Natural killer cell (primary cell): ENCODE measurements at regions of chr17 and their contacts with region 1.

Region 1: GRCh38 chr17:2592971-2593820 is at the start of gene PAFAH1B1:
- DNase-seq: peak; percentile 92 to 95
- ATAC-seq: peak; percentile 76 to 93 (median 79)
- H3K4me3 ChIP-seq: peak within 1 kb of the TSS; percentile 66
- H3K4me3 Mint-ChIP-seq: peak within 1 kb of the TSS; percentile 93
- H3K27ac ChIP-seq: peak within 1 kb of the TSS; percentile 99
- H3K27ac Mint-ChIP-seq: peak within 1 kb of the TSS; percentile 88 to 93
- H3K4me1 ChIP-seq: peaks cover 22% of the 10 kb centered on the region
- H3K4me1 Mint-ChIP-seq: peaks cover 25 to 32% of the 10 kb centered on the region in 2 donors
- H3K27me3 ChIP-seq: no peaks in the 10 kb centered on the region
- H3K27me3 Mint-ChIP-seq: no peaks in the 10 kb centered on the region
- CTCF ChIP-seq: no peak
- total RNA-seq, gene PAFAH1B1: 138 to 176 (median 165) TPM

Region 2: GRCh38 chr17:2532146-2532720 is 61.0 kb before region 1 on chr17:
- intact Hi-C with region 1: no loop called
- DNase-seq: no peak
- ATAC-seq: no peak
- H3K4me3 ChIP-seq: no peak overlapping the region
- H3K4me3 Mint-ChIP-seq: no peak overlapping the region
- H3K27ac ChIP-seq: no peak overlapping the region
- H3K27ac Mint-ChIP-seq: no peak overlapping the region
- H3K4me1 ChIP-seq: peaks cover 7% of the 10 kb centered on the region
- H3K4me1 Mint-ChIP-seq: peaks cover 7 to 11% of the 10 kb centered on the region in 2 donors
- H3K27me3 ChIP-seq: no peaks in the 10 kb centered on the region
- H3K27me3 Mint-ChIP-seq: no peaks in the 10 kb centered on the region
- CTCF ChIP-seq: no peak

Region 3: GRCh38 chr17:2656283-2656682 is 63.1 kb after region 1 on chr17:
- intact Hi-C with region 1: loop called (anchors 5 kb)
- DNase-seq: no peak
- ATAC-seq: peak in 1 of 3 donors; percentile 5
- H3K4me3 ChIP-seq: no peak overlapping the region
- H3K4me3 Mint-ChIP-seq: peak overlapping the region; percentile 56
- H3K27ac ChIP-seq: peak overlapping the region; percentile 40
- H3K27ac Mint-ChIP-seq: peak overlapping the region; percentile 79 to 84
- H3K4me1 ChIP-seq: peaks cover 15% of the 10 kb centered on the region
- H3K4me1 Mint-ChIP-seq: peaks cover 45 to 48% of the 10 kb centered on the region in 2 donors
- H3K27me3 ChIP-seq: no peaks in the 10 kb centered on the region
- H3K27me3 Mint-ChIP-seq: no peaks in the 10 kb centered on the region
- CTCF ChIP-seq: no peak

Region 4: DNA sequence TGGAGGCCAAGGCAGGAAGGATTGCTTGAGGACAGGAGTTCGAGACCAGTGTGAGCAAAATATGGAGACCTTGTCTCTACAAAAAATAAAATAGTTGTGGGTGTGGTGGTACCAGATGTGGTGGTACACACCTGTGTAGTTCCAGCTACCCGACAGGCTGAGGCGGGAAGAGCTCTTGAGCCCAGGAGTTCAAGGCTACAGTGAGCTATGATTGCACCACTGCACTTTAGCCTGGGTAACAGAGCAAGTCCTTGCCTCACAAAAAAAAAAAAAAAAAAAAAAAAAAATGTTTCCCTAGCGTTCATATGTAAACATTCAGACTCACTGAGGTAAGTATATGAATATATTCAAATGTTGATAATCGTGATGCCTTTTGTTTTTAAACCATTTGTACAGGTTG is 78.8 kb after region 1 on chr17:
- intact Hi-C with region 1: loop called (anchors 2 kb)
- DNase-seq: no peak
- ATAC-seq: no peak
- H3K4me3 ChIP-seq: no peak overlapping the region
- H3K4me3 Mint-ChIP-seq: no peak overlapping the region
- H3K27ac ChIP-seq: no peak overlapping the region
- H3K27ac Mint-ChIP-seq: peak overlapping the region in 1 of 2 donors; percentile 68
- H3K4me1 ChIP-seq: no peaks in the 10 kb centered on the region
- H3K4me1 Mint-ChIP-seq: peaks cover 0 to 6% of the 10 kb centered on the region in 2 donors
- H3K27me3 ChIP-seq: no peaks in the 10 kb centered on the region
- H3K27me3 Mint-ChIP-seq: no peaks in the 10 kb centered on the region
- CTCF ChIP-seq: no peak